A549 (cell line): ENCODE measurements at regions of chr6 and their contacts with region 1.

Region 1: DNA sequence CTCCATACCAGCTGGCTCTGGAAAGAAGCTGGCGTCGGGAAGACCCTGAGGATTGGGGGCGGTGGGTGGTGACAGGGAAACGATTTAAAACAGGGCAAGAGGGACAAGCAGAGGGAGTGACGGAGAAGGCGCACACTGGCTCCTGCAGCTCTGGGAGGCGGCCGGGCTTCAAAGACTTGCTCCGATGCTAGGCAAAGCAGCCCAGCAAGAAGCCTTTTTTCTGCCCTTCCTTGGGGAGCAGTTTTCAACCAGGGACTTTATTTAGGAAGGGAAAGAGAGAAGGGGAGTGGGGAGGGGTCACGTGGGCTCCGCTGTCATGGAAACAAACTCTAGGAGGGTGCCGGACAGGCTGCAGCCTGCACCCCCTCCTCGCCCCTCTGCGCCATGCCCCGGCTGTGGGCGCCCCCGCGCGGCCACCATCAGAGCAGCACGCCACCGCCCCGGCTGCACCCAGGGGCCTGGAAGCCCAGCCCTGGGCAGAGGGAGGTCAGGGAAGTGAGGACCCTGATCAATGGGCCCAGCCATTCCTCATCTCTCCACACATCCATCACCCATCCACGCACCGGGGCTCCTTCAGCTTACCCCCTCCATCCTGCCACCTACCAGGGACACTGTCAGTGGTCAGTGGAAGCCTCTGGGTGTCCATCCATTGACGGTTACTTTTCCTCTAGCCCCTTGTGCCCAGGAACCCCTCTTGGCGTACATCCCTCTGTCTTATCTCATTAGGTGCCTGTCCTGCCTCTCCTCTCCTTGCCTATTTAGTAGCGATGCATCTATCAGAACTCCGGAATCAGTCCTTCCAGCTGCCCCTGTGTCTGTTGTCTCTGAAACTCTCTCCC is 66.6 kb upstream of the CCDC167 start:
- DNase-seq: peak in 1 of 2 experiments; percentile 57
- ATAC-seq: peak; percentile 78 to 97; a peak in 5 of 6 replicates
- H3K4me3 ChIP-seq: no peak overlapping the region
- H3K27ac ChIP-seq: no peak overlapping the region; a peak in 1 of 6 replicates
- H3K4me1 ChIP-seq: no peaks in the 10 kb centered on the region
- CTCF ChIP-seq: peak; percentile 77
- EP300 ChIP-seq: no peak
- POLR2A ChIP-seq: no peak
- RAD21 ChIP-seq: peak; percentile 78 to 82

Region 2: GRCh38 chr6:37339741-37340638 is 226.3 kb before region 1 on chr6:
- CTCF ChIA-PET with region 1: no interaction called
- POLR2A ChIA-PET with region 1: no interaction called
- DNase-seq: no peak
- ATAC-seq: no peak
- H3K4me3 ChIP-seq: no peak overlapping the region
- H3K27ac ChIP-seq: no peak overlapping the region
- H3K4me1 ChIP-seq: no peaks in the 10 kb centered on the region
- CTCF ChIP-seq: no peak
- EP300 ChIP-seq: no peak
- POLR2A ChIP-seq: no peak
- RAD21 ChIP-seq: no peak

Region 3: GRCh38 chr6:37483917-37484785 is 82.2 kb before region 1 on chr6:
- CTCF ChIA-PET with region 1: interaction called, 11 read pairs
- POLR2A ChIA-PET with region 1: no interaction called
- DNase-seq: peak; percentile 26 to 55
- ATAC-seq: peak; percentile 88 to 93
- H3K4me3 ChIP-seq: no peak overlapping the region
- H3K27ac ChIP-seq: 0 out of 6 replicates have a peak overlapping the region, but pooled peaks of 1 of the 2 experiments have one; percentile 15
- H3K4me1 ChIP-seq: no peaks in the 10 kb centered on the region
- CTCF ChIP-seq: peak; percentile 71
- EP300 ChIP-seq: no peak
- POLR2A ChIP-seq: no peak
- RAD21 ChIP-seq: peak; percentile 84 to 85

Region 4: DNA sequence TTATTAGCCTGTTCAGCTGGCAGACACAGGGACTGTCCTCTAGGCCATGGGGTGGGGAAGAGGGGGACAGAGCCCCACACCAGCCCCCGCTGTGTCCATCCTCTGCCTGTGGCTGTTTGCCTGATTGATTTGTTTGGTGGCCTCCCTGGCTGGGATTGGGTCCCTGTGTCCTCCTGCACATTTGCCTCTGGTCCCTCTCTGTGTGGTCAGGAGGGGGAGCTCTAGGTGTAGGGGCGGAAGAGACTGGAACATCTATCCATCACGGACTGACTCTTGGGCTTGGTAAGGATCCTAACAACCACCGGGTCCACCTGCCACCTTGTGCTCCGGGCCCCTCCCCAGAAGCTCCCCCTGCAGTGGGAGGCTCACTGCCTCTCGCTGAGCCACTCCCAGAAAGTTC is 28.2 kb before region 1 on chr6:
- CTCF ChIA-PET with region 1: interaction called, 45 read pairs
- POLR2A ChIA-PET with region 1: no interaction called
- DNase-seq: peak; percentile 43 to 60
- ATAC-seq: peak; percentile 80 to 93; a peak in 5 of 6 replicates
- H3K4me3 ChIP-seq: no peak overlapping the region
- H3K27ac ChIP-seq: no peak overlapping the region
- H3K4me1 ChIP-seq: no peaks in the 10 kb centered on the region
- CTCF ChIP-seq: peak; percentile 45; the same call in 2 of the 3 replicates
- EP300 ChIP-seq: no peak
- POLR2A ChIP-seq: no peak
- RAD21 ChIP-seq: peak; percentile 63 to 80

Region 5: GRCh38 chr6:37547564-37548061 is 18.7 kb before region 1 on chr6:
- CTCF ChIA-PET with region 1: interaction called, 13 read pairs
- POLR2A ChIA-PET with region 1: no interaction called
- DNase-seq: no peak
- ATAC-seq: peak in 1 of 2 experiments; percentile 28; a peak in 1 of 6 replicates
- H3K4me3 ChIP-seq: no peak overlapping the region
- H3K27ac ChIP-seq: peak overlapping the region in 1 of 2 experiments; percentile 27; a peak in 1 of 6 replicates
- H3K4me1 ChIP-seq: peaks cover 15% of the 10 kb centered on the region; the same call in 2 of the 3 replicates
- CTCF ChIP-seq: no peak
- EP300 ChIP-seq: no peak
- POLR2A ChIP-seq: no peak
- RAD21 ChIP-seq: no peak

Region 6: GRCh38 chr6:37554480-37554819 is 11.9 kb before region 1 on chr6:
- CTCF ChIA-PET with region 1: interaction called, 17 read pairs
- POLR2A ChIA-PET with region 1: no interaction called
- DNase-seq: no peak
- ATAC-seq: peak in 1 of 2 experiments; percentile 38; a peak in 1 of 6 replicates
- H3K4me3 ChIP-seq: no peak overlapping the region
- H3K27ac ChIP-seq: peak overlapping the region; percentile 56 to 80
- H3K4me1 ChIP-seq: peaks cover 35% of the 10 kb centered on the region
- CTCF ChIP-seq: no peak
- EP300 ChIP-seq: no peak
- POLR2A ChIP-seq: no peak
- RAD21 ChIP-seq: no peak

Region 7: DNA sequence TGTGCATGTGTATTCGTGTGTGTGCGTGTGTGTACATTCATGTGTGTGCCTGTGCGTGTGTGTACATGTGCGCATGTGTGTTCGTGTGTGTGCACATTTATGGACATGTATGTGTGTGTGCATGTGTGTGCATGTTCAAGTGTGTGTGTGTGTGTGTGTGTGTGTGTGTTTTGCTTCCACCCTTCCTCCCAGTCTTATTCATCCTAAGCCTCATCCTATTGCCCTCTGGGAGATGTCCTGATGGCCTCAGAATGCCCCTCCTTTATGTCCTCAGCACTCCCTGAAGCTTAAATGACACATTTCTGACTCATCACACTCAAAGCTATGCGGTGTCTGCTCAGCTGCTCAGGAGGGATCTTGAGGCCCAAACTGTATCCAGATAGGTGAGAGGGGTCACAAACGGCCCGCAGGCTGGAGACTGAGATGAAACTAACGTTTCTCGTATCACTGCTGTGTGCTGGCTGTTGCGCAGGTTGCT is 10.0 kb after region 1 on chr6:
- CTCF ChIA-PET with region 1: interaction called, 39 read pairs
- POLR2A ChIA-PET with region 1: no interaction called
- DNase-seq: peak; percentile 60 to 81
- ATAC-seq: peak; percentile 87 to 93
- H3K4me3 ChIP-seq: no peak overlapping the region
- H3K27ac ChIP-seq: peak overlapping the region; percentile 60 to 82
- H3K4me1 ChIP-seq: peaks cover 22% of the 10 kb centered on the region
- CTCF ChIP-seq: no peak
- EP300 ChIP-seq: no peak
- POLR2A ChIP-seq: no peak
- RAD21 ChIP-seq: no peak